Activated T-helper 2 cell treated with anti-CD3 and anti-CD28 coated beads, Interferon-gamma antibody, Interleukin-2, Interleukin-4, amounts not matched to agents 10 μg/mL and 5 μg/mL and 100 μg/mL, durations not matched to agents 14 hours and 24 hours and 36 hours (primary cell): ENCODE measurements at regions of chr12 and their contacts with region 1.

Region 1: DNA sequence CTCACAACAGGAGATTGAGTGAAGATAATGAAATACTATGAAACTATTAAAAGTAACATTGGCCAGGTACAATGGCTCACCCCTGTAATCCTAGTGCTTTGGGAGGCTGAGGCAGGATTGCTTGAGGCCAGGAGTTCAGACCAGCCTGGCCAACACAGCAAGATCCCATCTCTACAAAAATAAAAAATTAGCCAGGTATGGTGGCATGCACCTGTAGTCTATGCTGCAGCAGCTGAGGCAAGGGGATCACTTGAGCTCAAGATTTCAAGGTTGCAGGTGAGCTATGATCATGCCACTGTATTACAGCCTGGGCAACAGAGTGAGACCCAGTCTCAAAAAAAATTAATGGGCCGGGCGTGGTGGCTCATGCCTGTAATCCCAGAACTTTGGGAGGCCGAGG is 14.9 kb downstream of the RAD9B start:
- DNase-seq: no peak
- H3K4me3 Mint-ChIP-seq: no peak overlapping the region
- H3K27ac Mint-ChIP-seq: no peak overlapping the region
- H3K4me1 Mint-ChIP-seq: peaks cover 13% of the 10 kb centered on the region
- H3K27me3 Mint-ChIP-seq: peaks cover 2% of the 10 kb centered on the region

Region 2: DNA sequence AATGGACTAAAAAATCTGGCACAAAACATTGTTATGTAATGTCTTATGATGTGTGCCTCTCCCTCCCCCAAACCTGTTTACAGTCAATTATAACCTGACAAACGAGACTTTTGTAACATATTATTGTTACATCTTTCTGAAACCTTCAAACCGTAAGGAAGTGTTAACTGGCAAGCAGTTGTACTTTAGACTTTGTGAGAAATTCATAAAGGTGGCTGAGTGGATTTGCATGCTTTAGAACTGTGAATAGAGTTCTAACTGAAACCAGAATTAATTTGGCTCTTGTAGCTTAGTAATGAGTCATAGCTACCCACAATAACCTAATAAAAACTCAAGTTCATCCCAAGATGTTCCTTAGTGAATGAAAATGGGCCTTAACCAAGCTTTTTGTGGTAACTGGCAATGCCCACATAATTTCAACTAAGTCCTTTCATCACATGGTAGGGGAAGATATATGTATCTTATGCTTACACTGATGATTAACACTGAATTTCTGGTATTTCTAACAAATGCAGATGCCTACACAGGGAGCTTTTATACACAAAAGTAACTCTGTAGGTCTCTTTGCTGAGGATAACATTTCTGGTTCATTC is 14.8 kb after region 1 on chr12:
- intact Hi-C with region 1: loop called (anchors 1 kb)
- DNase-seq: no peak
- H3K4me3 Mint-ChIP-seq: no peak overlapping the region
- H3K27ac Mint-ChIP-seq: peak overlapping the region; percentile 57
- H3K4me1 Mint-ChIP-seq: peaks cover 27% of the 10 kb centered on the region
- H3K27me3 Mint-ChIP-seq: no peaks in the 10 kb centered on the region

Region 3: DNA sequence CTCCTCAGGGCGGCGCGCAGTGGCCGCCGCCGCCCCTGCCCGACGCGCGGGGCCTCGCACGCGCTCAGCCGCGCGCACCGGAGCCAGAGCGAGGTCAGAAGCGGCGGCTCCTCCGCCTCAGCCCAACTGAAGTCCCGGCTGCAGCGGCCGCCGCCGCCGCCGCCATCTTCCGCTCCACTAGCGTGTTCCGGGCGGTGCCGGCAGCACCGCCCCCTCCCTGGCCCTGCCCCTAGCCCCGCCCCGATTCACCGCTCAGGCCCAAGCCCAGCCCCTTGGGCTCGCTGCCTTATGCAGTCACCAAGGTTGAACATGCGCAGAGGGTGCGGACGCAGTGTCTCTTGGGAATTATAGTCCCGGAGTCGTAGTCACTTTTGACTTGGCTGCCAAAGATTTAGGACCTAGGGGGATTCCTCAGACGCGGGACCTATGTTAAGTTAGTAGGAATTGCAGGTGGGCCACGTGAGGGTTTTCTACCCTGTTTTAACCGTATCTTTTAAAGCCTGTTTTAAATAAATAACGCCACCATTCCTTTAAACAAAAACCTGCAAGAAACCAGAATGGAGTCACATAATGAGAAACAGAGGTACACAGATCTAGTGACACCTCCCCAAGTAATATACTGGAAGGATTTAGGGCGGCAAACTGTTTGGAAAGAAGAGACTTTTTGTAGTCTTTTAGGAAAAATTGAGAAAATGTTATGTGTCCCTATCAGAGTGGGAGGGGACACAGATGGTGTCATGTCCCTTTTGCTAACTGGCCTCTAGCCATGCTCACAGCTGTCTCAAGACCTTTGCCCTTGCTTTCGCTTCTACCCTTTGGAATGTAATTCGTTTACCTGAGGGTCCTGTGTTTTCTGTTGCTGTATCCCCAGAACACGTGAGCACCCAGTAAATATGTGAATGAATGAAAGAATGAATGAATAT is 66.4 kb after region 1 on chr12 and contains the start of gene PPTC7:
- intact Hi-C with region 1: loop called (anchors 2 kb)
- DNase-seq: peak; percentile 91
- H3K4me3 Mint-ChIP-seq: peak within 1 kb of the TSS; percentile 98
- H3K27ac Mint-ChIP-seq: peak within 1 kb of the TSS; percentile 96
- H3K4me1 Mint-ChIP-seq: peaks cover 61% of the 10 kb centered on the region
- H3K27me3 Mint-ChIP-seq: no peaks in the 10 kb centered on the region
- total RNA-seq, gene PPTC7: 41.7 and 42.4 TPM in 2 replicates